K562 (cell line): ENCODE measurements at regions of chr1 and their contacts with region 1.

Region 1: DNA sequence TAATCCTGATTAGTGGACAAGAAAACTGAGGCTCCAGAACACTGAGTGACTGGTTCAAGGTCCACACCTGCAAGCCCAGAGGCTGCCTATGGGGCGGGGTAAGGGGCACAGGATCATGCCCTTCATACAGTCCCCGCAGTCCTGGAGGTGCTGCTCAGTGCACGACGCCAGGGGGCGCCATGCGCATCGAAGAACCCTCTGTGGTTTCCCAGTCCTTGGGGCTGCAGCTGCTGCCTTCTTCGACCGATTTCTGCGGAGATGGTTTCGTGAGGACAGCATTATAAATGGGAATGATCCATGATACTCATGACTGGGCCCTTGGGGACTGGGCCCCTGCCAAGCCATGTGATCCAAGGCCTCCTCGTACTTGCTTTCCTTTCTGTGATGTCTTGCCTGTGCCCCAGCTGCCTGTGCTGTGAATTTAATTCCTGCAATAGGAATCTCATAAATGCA is 37.1 kb upstream of the ARHGEF10L start:
- DNase-seq: peak; percentile 79 to 88 (median 84)
- ATAC-seq: peak; percentile 100
- H3K4me3 ChIP-seq: no peak overlapping the region
- H3K27ac ChIP-seq: no peak overlapping the region
- H3K4me1 ChIP-seq: no peaks in the 10 kb centered on the region
- H3K27me3 ChIP-seq: peaks cover 22 to 37% of the 10 kb centered on the region in 2 experiments; a peak in 4 of 5 replicates
- CTCF ChIP-seq: peak; percentile 91 to 96 (median 93)
- EP300 ChIP-seq: no peak
- POLR2A ChIP-seq: no peak
- RAD21 ChIP-seq: peak; percentile 60 to 92

Region 2: DNA sequence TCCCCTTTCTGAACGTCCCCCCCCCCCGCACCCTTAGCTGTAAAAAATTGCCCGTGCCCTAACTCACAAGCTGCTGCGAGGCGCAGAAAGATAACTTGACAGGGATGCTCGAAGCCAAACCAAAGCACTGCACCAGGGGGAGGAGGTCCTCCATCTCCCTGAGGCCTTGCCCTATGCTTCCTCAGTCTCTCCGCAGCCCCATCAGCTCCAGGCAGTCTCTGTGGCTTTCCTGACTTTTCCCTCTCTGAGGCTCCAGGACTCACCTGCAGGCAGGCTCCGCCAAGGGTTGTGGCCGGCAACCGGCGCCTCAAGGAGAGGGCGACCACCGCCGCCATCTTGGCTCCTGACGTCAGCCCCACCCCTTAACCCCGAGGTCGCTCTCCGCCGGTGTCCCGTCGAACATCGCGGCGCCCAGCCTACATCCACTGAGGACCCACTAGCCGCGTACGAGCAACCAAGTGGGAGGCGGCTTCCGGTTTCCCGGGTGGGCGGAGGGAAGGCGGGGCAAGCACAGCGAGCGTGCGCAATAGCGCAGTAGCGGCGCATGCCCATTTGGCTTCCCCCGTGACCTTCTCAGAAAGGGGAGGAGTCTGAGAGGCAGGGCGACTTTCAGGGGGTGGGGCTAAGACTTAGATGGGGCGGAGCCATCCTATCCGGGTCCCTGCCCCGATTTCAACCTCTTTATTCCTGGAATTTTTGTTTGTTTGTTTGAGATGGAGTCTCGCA is 448.5 kb before region 1 on chr1 and contains the start of gene SDHB:
- CTCF ChIA-PET with region 1: no interaction called
- POLR2A ChIA-PET with region 1: no interaction called
- in situ Hi-C with region 1: no loop called
- intact Hi-C with region 1: no loop called
- DNase-seq: peak; percentile 99
- ATAC-seq: peak; percentile 99
- H3K4me3 ChIP-seq: peak within 1 kb of the TSS; percentile 53
- H3K27ac ChIP-seq: peak within 1 kb of the TSS; percentile 80
- H3K4me1 ChIP-seq: peaks cover 0 to 15% of the 10 kb centered on the region in 2 experiments; a peak in 3 of 5 replicates
- H3K27me3 ChIP-seq: peaks cover 5 to 8% of the 10 kb centered on the region in 2 experiments; a peak in 3 of 5 replicates
- CTCF ChIP-seq: 0 out of 6 replicates have a peak, but pooled peaks of 1 of the 3 experiments have one; percentile 0
- EP300 ChIP-seq: peak; percentile 48
- POLR2A ChIP-seq: peak; percentile 94
- RAD21 ChIP-seq: no peak
- polyA plus RNA-seq, gene SDHB: 207 to 339 TPM

Region 3: GRCh38 chr1:17304151-17304825 is 198.1 kb before region 1 on chr1:
- CTCF ChIA-PET with region 1: no interaction called
- POLR2A ChIA-PET with region 1: no interaction called
- in situ Hi-C with region 1: no loop called
- intact Hi-C with region 1: no loop called
- DNase-seq: no peak
- ATAC-seq: no peak
- H3K4me3 ChIP-seq: no peak overlapping the region
- H3K27ac ChIP-seq: no peak overlapping the region
- H3K4me1 ChIP-seq: peaks cover 10 to 13% of the 10 kb centered on the region in 2 experiments
- H3K27me3 ChIP-seq: peaks cover 6 to 29% of the 10 kb centered on the region in 2 experiments; a peak in 4 of 5 replicates
- CTCF ChIP-seq: no peak
- EP300 ChIP-seq: no peak
- POLR2A ChIP-seq: no peak
- RAD21 ChIP-seq: no peak

Region 4: GRCh38 chr1:17601643-17602382 is 99.5 kb after region 1 on chr1:
- CTCF ChIA-PET with region 1: interaction called, 26 read pairs
- POLR2A ChIA-PET with region 1: interaction called, 4 read pairs
- in situ Hi-C with region 1: loop called (anchors 5 kb)
- intact Hi-C with region 1: loop called (anchors 1 kb)
- DNase-seq: peak in 3 of 4 experiments; percentile 27 to 57 (median 28)
- ATAC-seq: peak; percentile 79
- H3K4me3 ChIP-seq: no peak overlapping the region
- H3K27ac ChIP-seq: no peak overlapping the region
- H3K4me1 ChIP-seq: peaks cover 0 to 5% of the 10 kb centered on the region in 2 experiments; a peak in 1 of 5 replicates
- H3K27me3 ChIP-seq: peaks cover 41 to 62% of the 10 kb centered on the region in 2 experiments; a peak in 4 of 5 replicates
- CTCF ChIP-seq: peak; percentile 55 to 61 (median 61)
- EP300 ChIP-seq: no peak
- POLR2A ChIP-seq: no peak
- RAD21 ChIP-seq: peak; percentile 30 to 70; a peak in 2 of 4 replicates

Region 5: GRCh38 chr1:18581420-18581880 is 1079.1 kb after region 1 on chr1:
- CTCF ChIA-PET with region 1: interaction called, 5 read pairs
- POLR2A ChIA-PET with region 1: no interaction called
- in situ Hi-C with region 1: loop called (anchors 5 kb)
- intact Hi-C with region 1: no loop called
- DNase-seq: peak; percentile 66 to 89 (median 82)
- ATAC-seq: peak; percentile 91
- H3K4me3 ChIP-seq: no peak overlapping the region
- H3K27ac ChIP-seq: no peak overlapping the region
- H3K4me1 ChIP-seq: peaks cover 0 to 5% of the 10 kb centered on the region in 2 experiments; a peak in 2 of 5 replicates
- H3K27me3 ChIP-seq: peaks cover 0 to 1% of the 10 kb centered on the region in 2 experiments; a peak in 1 of 5 replicates
- CTCF ChIP-seq: peak; percentile 87 to 90 (median 89)
- EP300 ChIP-seq: no peak
- POLR2A ChIP-seq: no peak
- RAD21 ChIP-seq: peak; percentile 83 to 89